ENCODE measurements at regions of chr20 and their contacts with region 1.

Region 1: DNA sequence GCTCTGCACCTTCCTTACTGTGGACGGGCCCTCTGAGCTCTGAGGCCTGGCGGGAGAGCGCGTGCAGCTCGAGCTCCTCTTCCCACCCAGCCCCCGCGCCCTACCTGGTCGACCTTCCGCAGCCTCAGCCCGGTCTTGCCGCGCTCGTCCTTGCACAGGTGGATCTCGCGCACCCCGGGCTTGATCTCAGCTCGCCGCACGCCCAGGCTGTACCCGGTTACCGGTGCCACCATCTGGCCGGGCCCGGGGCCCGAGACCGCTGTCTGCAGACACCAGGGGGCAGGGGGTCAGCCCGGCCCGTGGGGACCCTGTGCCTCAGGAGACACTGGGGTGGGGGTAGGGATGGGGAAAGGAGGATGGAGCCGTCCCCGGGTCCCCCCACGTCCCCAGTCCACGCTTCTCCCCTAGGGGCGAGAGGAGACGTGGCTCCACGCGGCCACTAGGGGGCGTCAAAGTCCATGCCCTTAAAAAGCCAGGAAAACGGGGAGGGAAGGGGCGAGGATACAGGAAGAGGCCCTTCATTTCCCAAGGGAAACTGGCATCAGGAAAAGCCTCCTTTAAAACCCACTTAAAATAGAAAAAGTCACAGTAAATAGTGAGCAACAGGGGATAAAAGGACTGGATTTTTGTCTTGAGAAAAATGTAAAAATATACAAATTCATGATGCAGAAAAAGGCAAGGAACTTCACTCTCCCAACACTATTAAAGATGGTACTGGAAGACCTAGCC is 15.5 kb downstream of the SDCBP2 start:
- H3K4me3 ChIP-seq: peak overlapping the region; percentile 16; the same call in 1 of the 2 replicates
- H3K27ac ChIP-seq: no peak overlapping the region; the same call in 1 of the 2 replicates
- H3K4me1 ChIP-seq: 0 out of 2 replicates have a peak, but pooled peaks cover 2% of the 10 kb centered on the region
- CTCF ChIP-seq: peak; percentile 50

Region 2: DNA sequence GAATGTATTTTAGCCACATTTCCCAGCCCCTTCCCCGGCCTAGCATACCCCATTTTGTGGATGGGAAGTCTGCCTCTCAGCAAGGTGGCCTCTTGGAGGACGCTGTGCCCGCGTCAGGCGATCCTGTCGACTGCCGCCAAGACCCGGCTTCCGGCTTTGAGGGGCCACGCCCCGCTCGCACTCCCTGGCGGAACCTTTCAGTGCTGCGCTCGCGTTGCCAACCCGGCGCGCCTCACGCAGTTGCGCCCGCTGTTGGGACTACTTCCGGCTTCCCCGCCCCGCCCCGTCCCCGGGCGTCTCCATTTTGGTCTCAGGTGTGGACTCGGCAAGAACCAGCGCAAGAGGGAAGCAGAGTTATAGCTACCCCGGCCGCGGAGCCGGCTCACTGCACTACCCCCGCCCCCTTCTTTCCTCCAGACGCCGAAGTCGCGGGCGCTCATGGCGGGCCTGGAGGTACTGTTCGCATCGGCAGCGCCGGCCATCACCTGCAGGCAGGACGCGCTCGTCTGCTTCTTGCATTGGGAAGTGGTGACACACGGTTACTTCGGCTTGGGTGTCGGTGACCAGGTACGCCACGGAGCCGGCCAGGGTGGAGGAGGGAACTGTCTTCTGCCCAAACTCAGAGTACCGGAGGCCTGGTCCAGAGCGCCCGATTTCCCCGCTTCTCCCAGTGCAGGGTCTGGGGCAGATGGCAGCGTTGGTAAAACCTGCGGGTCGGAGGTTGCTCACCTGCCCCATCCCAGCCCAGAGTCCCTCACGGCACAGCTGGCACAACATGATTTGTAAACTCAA is 194.9 kb before region 1 on chr20 and contains the start of gene PSMF1:
- CTCF ChIA-PET with region 1: no interaction called
- POLR2A ChIA-PET with region 1: no interaction called
- H3K4me3 ChIP-seq: peak within 1 kb of the TSS; percentile 96
- H3K27ac ChIP-seq: peak within 1 kb of the TSS; percentile 76
- H3K4me1 ChIP-seq: peaks cover 37% of the 10 kb centered on the region
- CTCF ChIP-seq: peak; percentile 38; the same call in 1 of the 2 replicates

Region 3: GRCh38 chr20:1291191-1291741 is 22.1 kb before region 1 on chr20:
- CTCF ChIA-PET with region 1: no interaction called
- POLR2A ChIA-PET with region 1: no interaction called
- H3K4me3 ChIP-seq: no peak overlapping the region
- H3K27ac ChIP-seq: no peak overlapping the region
- H3K4me1 ChIP-seq: no peaks in the 10 kb centered on the region
- CTCF ChIP-seq: no peak

Region 4: DNA sequence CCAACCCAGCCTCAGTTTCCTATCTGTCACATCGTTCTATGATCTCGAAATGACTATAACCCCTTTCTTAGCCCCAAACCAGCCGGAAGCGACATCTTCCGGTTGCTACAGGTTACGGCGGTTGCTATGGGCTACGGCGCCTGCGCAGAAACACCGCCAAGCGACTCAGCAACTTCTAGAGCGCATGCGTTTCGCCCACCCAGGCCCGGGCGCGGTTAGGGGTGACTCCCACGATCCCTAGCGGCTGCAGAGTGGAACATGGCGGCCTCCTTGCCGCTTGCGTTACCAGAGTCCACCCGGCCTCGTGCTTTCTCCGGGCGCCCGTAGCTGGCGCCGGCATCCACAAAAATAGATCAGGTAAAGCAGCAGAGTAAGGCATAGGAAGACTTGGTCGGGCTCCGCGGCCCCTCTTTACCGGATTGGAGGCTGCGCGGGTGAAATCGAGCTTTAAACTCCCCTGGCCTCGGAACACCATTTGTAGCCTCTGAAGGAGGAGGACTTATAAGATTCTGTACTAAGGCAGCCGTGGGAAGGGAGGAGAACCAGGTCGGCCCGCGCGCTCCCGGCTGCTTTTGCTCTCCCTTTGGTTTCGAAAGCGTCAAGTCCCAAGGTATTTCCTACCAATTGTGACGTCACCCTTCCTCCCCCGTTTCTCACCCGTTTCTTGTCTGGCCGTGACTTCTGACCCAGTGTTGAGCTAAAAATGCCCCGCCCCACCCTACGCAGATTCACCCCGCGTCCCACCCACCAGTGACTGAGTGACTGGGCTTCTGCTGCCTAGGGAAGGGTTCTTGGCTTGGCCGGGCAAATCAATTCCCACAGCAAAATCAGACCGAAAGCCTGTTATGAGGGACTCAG is 12.0 kb after region 1 on chr20:
- CTCF ChIA-PET with region 1: interaction called, 14 read pairs
- POLR2A ChIA-PET with region 1: interaction called, 3 read pairs
- H3K4me3 ChIP-seq: peak overlapping the region; percentile 66
- H3K27ac ChIP-seq: peak overlapping the region; percentile 93
- H3K4me1 ChIP-seq: peaks cover 23% of the 10 kb centered on the region
- CTCF ChIP-seq: 0 out of 2 replicates have a peak, but pooled peaks have one; percentile 45

Region 5: GRCh38 chr20:1405801-1406200 is 92.4 kb after region 1 on chr20:
- CTCF ChIA-PET with region 1: no interaction called
- POLR2A ChIA-PET with region 1: no interaction called
- H3K4me3 ChIP-seq: no peak overlapping the region
- H3K27ac ChIP-seq: no peak overlapping the region
- H3K4me1 ChIP-seq: no peaks in the 10 kb centered on the region
- CTCF ChIP-seq: no peak

Measured in HEK293 (cell line).